ENCODE measurements at regions of chr4 and their contacts with region 1.

Region 1: GRCh38 chr4:164768516-164768915 is 14.6 kb downstream of the SMIM31 start:
- DNase-seq: peak; percentile 13
- CTCF ChIP-seq: peak; percentile 19

Region 2: GRCh38 chr4:164779811-164780216 is 11.3 kb after region 1 on chr4:
- CTCF ChIA-PET with region 1: interaction called, 56 read pairs
- POLR2A ChIA-PET with region 1: no interaction called
- DNase-seq: peak; percentile 51
- CTCF ChIP-seq: peak; percentile 95